CD14-positive monocyte (primary cell): ENCODE measurements at regions of chr16 and their contacts with region 1.

Region 1: GRCh38 chr16:2821487-2822157 is 4.6 kb downstream of the PRSS21 start:
- DNase-seq: no peak
- H3K4me3 ChIP-seq: no peak overlapping the region
- H3K4me3 Mint-ChIP-seq: no peak overlapping the region
- H3K27ac ChIP-seq: no peak overlapping the region
- H3K27ac Mint-ChIP-seq: peak overlapping the region in 1 of 7 donors; percentile 64
- H3K4me1 ChIP-seq: peaks cover 0 to 3% of the 10 kb centered on the region in 2 donors
- H3K4me1 Mint-ChIP-seq: peaks cover 6% of the 10 kb centered on the region
- H3K27me3 ChIP-seq: no peaks in the 10 kb centered on the region
- H3K27me3 Mint-ChIP-seq: peaks cover 3 to 6% (median 6%) of the 10 kb centered on the region in 3 donors
- CTCF ChIP-seq: no peak

Region 2: GRCh38 chr16:2784951-2785635 is 36.5 kb before region 1 on chr16:
- intact Hi-C with region 1: loop called (anchors 5 kb)
- DNase-seq: peak in 2 of 3 donors; percentile 23 to 25
- H3K4me3 ChIP-seq: peak overlapping the region in 2 of 3 experiments; percentile 38 to 78
- H3K4me3 Mint-ChIP-seq: peak overlapping the region; percentile 77 to 91
- H3K27ac ChIP-seq: peak overlapping the region in 1 of 2 donors; percentile 31
- H3K27ac Mint-ChIP-seq: no peak overlapping the region
- H3K4me1 ChIP-seq: peaks cover 17 to 22% of the 10 kb centered on the region in 2 donors
- H3K4me1 Mint-ChIP-seq: peaks cover 19% of the 10 kb centered on the region
- H3K27me3 ChIP-seq: peaks cover 6 to 43% of the 10 kb centered on the region in 2 donors
- H3K27me3 Mint-ChIP-seq: peaks cover 33 to 68% (median 49%) of the 10 kb centered on the region in 3 donors
- CTCF ChIP-seq: no peak

Region 3: GRCh38 chr16:2926650-2927646 is 105.3 kb after region 1 on chr16:
- intact Hi-C with region 1: no loop called
- DNase-seq: peak; percentile 86 to 92 (median 90)
- H3K4me3 ChIP-seq: peak overlapping the region in 1 of 3 experiments; percentile 31
- H3K4me3 Mint-ChIP-seq: no peak overlapping the region
- H3K27ac ChIP-seq: no peak overlapping the region
- H3K27ac Mint-ChIP-seq: peak overlapping the region in 3 of 7 donors; percentile 9 to 82 (median 43)
- H3K4me1 ChIP-seq: peaks cover 6 to 8% of the 10 kb centered on the region in 2 donors
- H3K4me1 Mint-ChIP-seq: peaks cover 8% of the 10 kb centered on the region
- H3K27me3 ChIP-seq: no peaks in the 10 kb centered on the region
- H3K27me3 Mint-ChIP-seq: no peaks in the 10 kb centered on the region
- CTCF ChIP-seq: peak; percentile 95